Posterior vena cava (tissue), 2 donors: ENCODE measurements at regions of chr14 and their contacts with region 1.

Region 1: GRCh38 chr14:96204151-96205058 is at the start of gene BDKRB2:
- DNase-seq: peak; percentile 87
- total RNA-seq, gene BDKRB2: 4.6 to 10.3 TPM

Region 2: DNA sequence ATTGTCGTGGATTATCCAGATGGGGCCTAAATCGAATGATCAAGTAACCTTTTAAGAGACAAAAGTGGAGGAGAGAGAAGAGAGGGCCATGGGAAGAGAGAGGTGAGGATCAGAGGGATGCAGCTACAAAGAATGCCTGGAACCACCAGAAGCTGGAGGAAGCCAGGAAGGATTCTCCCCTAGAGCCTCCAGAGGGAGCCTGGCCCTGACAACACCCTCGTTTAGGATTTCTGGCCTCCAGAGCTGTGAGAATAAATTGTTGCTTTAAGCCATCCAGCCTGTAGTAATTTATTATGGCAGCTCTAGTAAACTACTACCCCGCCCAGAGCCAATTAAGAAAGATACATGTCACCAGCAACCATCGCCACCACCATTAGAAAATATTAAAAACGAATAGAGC is 1388.3 kb before region 1 on chr14:
- intact Hi-C with region 1: loop called in 1 of 2 experiments (anchors 10 kb)
- DNase-seq: no peak

Region 3: GRCh38 chr14:95903616-95904107 is 300.7 kb before region 1 on chr14:
- intact Hi-C with region 1: no loop called
- DNase-seq: no peak